Stomach (tissue), 19 donors: ENCODE measurements at regions of chr10 and their contacts with region 1.

Region 1: DNA sequence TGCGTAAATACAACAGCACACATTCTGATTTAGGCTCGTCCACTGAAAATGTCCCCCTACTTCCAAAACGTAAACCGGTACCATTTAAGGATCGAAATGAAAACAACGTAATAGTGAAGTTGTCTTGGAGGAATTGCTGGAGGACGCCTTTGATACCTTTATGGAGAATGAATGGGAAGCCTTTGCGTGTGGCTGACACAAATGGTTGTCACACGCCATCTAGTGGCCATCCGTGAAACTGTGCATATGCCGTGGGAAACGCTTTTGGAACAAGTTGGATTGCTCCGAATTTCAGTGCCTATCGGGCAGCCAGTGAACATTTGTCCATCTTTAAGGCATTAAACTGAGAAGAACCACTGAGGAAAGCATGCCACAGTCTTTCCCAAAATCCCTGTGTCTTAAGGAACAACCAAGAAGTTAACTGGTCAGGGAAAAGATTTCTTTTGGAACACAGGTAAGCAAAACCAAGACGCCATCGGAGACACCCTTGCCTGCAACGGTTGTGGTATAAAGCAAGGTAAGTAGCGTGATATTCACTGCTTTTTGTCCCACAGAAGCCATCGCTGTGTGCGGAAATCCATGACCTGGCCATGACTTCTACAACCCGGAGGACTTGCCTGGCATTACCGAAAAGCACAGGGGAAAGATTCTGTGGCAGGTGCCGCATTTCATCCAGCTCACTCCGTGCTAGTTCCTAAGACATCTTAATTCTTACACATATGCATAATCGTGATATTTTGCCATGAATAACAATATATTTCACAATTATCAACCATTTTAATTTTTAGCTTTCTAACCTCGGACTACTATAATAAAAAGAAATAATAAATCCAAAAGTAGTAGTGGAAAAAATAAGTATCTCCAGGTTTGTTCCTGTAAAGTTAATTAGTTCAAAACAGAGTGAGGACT is 100.6 kb downstream of the FAM204A start:
- DNase-seq: peak; percentile 79 to 93
- H3K4me3 ChIP-seq: no peak overlapping the region
- H3K27ac ChIP-seq: no peak overlapping the region
- H3K4me1 ChIP-seq: peaks cover 0 to 8% (median 3%) of the 10 kb centered on the region in 4 donors
- H3K27me3 ChIP-seq: peaks cover 0 to 95% (median 59%) of the 10 kb centered on the region in 3 donors
- CTCF ChIP-seq: peak in 5 of 7 experiments; percentile 84 to 91 (median 88)
- EP300 ChIP-seq: no peak
- POLR2A ChIP-seq: no peak

Region 2: GRCh38 chr10:117496616-117497028 is 744.9 kb before region 1 on chr10:
- intact Hi-C with region 1: loop called (anchors 5 kb)
- DNase-seq: peak; percentile 76 to 92
- H3K4me3 ChIP-seq: no peak overlapping the region
- H3K27ac ChIP-seq: no peak overlapping the region
- H3K4me1 ChIP-seq: peaks cover 0 to 8% (median 2%) of the 10 kb centered on the region in 4 donors
- H3K27me3 ChIP-seq: peaks cover 0 to 49% (median 6%) of the 10 kb centered on the region in 3 donors
- CTCF ChIP-seq: peak in 5 of 7 experiments; percentile 82 to 90 (median 89)
- EP300 ChIP-seq: no peak
- POLR2A ChIP-seq: no peak